ENCODE measurements at regions of chr10 and their contacts with region 1.

Region 1: GRCh38 chr10:22436884-22437619 is 91.8 kb downstream of the SPAG6 start:
- H3K4me3 Mint-ChIP-seq: peak overlapping the region; percentile 88
- H3K27ac Mint-ChIP-seq: peak overlapping the region; percentile 99
- H3K4me1 Mint-ChIP-seq: peaks cover 56% of the 10 kb centered on the region
- H3K27me3 Mint-ChIP-seq: peaks cover 28% of the 10 kb centered on the region

Region 2: GRCh38 chr10:21807180-21807579 is 629.9 kb before region 1 on chr10:
- intact Hi-C with region 1: no loop called
- H3K4me3 Mint-ChIP-seq: no peak overlapping the region
- H3K27ac Mint-ChIP-seq: no peak overlapping the region
- H3K4me1 Mint-ChIP-seq: no peaks in the 10 kb centered on the region
- H3K27me3 Mint-ChIP-seq: no peaks in the 10 kb centered on the region

Region 3: GRCh38 chr10:22003079-22003913 is 433.8 kb before region 1 on chr10 and contains the start of gene DNAJC1:
- intact Hi-C with region 1: loop called (anchors 5 kb)
- H3K4me3 Mint-ChIP-seq: peak within 1 kb of the TSS; percentile 90
- H3K27ac Mint-ChIP-seq: peak within 1 kb of the TSS; percentile 87
- H3K4me1 Mint-ChIP-seq: peaks cover 23% of the 10 kb centered on the region
- H3K27me3 Mint-ChIP-seq: no peaks in the 10 kb centered on the region

Region 4: DNA sequence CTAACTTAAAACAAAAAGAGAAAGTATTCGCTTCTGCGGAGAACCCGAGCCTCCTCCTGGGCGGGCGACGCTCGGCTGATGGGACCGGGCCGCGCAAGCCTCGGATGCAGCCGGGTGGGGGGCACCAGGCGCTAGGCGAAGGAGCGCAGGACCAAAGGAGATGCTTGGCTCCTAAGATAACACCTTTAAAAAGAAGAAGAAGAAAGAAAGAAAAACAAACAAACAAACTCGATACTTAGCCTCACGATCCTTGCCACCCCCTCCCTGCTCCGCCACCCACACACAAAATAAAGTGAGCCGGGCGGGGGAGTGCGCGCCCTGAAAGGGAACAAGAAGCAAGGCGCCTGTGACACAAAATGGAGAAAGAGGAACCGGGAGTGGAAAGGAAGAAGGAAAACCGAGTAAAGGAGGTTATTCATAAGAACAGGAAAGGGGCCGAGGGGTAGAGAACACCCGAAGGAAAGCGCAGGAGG is 185.3 kb before region 1 on chr10:
- intact Hi-C with region 1: loop called (anchors 5 kb)
- H3K4me3 Mint-ChIP-seq: peak overlapping the region; percentile 93
- H3K27ac Mint-ChIP-seq: peak overlapping the region; percentile 99
- H3K4me1 Mint-ChIP-seq: peaks cover 17% of the 10 kb centered on the region
- H3K27me3 Mint-ChIP-seq: no peaks in the 10 kb centered on the region

Region 5: GRCh38 chr10:22334414-22335172 is 102.5 kb before region 1 on chr10:
- intact Hi-C with region 1: loop called (anchors 5 kb)
- H3K4me3 Mint-ChIP-seq: peak overlapping the region; percentile 85
- H3K27ac Mint-ChIP-seq: peak overlapping the region; percentile 88
- H3K4me1 Mint-ChIP-seq: peaks cover 35% of the 10 kb centered on the region
- H3K27me3 Mint-ChIP-seq: peaks cover 68% of the 10 kb centered on the region

Region 6: DNA sequence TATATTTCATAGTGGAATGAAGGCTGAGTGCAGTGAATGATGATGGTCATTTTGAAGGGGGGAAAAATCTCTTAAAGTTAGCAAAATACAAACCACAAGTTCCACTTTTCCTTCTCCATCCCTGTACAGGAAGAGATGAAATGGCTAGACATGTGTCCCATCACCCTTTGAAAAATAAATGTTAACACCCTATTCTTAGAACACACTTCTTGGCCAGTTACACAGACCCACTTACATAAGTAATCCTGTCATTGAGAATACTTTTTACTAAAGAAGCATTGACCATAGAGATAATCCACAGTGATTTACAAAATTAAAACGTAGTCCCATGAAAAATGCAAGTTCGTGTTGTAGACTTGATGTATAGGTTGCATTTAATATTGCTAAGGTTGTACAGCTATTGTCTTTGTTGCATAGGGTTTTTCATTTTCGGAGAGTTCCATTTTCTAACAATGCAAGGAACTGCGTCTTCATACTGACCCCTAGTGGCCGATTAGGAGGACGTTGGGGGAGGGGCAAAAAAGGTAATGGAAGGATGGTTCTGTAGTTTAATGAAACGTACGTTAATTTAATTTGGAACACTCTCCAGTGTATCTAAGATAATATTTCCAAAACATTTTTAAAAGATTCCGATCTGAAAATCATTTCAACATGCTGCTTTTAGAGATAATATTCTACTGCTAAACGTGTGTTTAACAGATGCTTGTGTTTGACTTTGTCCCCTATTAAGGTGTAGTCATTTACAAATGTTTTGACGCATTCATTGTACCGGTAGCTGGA is 551.7 kb after region 1 on chr10:
- intact Hi-C with region 1: loop called (anchors 5 kb)
- H3K4me3 Mint-ChIP-seq: no peak overlapping the region
- H3K27ac Mint-ChIP-seq: no peak overlapping the region
- H3K4me1 Mint-ChIP-seq: peaks cover 10% of the 10 kb centered on the region
- H3K27me3 Mint-ChIP-seq: peaks cover 16% of the 10 kb centered on the region

Measured in dendritic cell treated with granulocyte-macrophage colony-stimulating factor and Interleukin-4, amounts not matched to agents 40 ng/mL and 50 ng/mL, for 4 days (primary cell).